Activated B cell treated with CpG ODN at 0.5 μM for 24 hours (primary cell): ENCODE measurements at regions of chr4 and their contacts with region 1.

Region 1: DNA sequence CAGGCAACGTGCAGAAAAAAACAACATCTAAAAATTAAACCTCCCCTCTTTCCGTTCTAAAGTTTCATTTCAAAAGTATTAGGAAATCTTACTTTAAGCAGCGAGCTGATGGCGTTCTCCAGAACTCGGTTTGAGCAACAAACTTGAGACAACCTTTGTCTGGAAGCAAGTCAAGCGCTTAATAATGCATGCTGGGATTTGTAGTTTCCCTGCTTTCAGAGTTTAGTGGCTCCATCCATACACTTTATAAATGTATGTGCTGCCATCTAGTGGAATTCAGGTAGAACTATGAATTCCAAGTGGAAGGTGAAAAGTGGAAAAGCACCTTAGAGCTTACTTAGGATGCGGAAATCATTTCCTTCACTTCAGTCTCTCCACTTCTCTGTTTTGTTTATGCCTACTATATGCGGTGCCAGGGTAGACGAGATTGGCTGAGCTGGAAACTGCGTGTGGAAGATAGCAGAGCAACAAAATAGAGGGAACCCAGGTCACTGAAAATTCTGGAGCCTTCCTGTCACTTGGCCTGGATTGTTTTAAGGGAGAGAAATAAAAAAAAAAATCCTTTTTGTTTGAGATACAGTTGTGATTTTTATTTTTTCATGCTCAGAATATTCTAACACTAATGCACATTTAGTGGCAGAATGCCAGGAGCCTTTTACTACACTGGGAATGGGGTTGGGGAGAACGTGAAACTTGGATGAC is at the start of gene BDH2:
- DNase-seq: no peak
- ATAC-seq: peak; percentile 99
- H3K4me3 Mint-ChIP-seq: peak within 1 kb of the TSS; percentile 79
- H3K27ac Mint-ChIP-seq: peak within 1 kb of the TSS; percentile 63
- H3K4me1 Mint-ChIP-seq: peaks cover 14% of the 10 kb centered on the region
- H3K27me3 Mint-ChIP-seq: no peaks in the 10 kb centered on the region
- CTCF ChIP-seq: peak; percentile 37
- total RNA-seq, gene BDH2: 5.1 and 6.5 TPM in 2 replicates

Region 2: DNA sequence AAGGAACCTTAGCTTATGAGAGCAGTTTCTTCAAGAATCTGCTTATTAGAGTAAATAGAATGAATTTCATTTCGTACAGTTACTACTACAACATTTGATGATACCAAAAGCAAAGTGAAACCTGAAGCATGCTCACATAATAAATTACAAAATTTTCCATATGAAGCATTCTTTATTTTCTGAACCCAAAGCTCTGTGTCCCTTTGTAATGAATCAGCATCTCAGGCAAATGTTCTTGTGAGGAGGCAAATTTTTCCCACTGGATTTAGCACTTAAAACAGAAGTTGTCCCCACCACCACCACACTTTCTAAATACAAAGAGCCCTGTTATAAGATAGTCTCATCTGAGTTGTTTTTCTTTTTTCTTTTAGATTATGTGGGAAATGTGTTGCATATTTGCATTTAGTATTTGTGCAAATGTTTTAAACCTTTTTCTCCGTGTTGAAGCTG is 669.4 kb before region 1 on chr4:
- CTCF ChIA-PET with region 1: no interaction called
- POLR2A ChIA-PET with region 1: no interaction called
- intact Hi-C with region 1: loop called (anchors 1 kb)
- DNase-seq: no peak
- ATAC-seq: no peak
- H3K4me3 Mint-ChIP-seq: peak overlapping the region; percentile 92
- H3K27ac Mint-ChIP-seq: peak overlapping the region; percentile 76
- H3K4me1 Mint-ChIP-seq: peaks cover 5% of the 10 kb centered on the region
- H3K27me3 Mint-ChIP-seq: no peaks in the 10 kb centered on the region
- CTCF ChIP-seq: no peak

Region 3: GRCh38 chr4:102620697-102621497 is 478.9 kb before region 1 on chr4:
- CTCF ChIA-PET with region 1: no interaction called
- POLR2A ChIA-PET with region 1: no interaction called
- intact Hi-C with region 1: loop called (anchors 1 kb)
- DNase-seq: no peak
- ATAC-seq: no peak
- H3K4me3 Mint-ChIP-seq: no peak overlapping the region
- H3K27ac Mint-ChIP-seq: peak overlapping the region; percentile 30
- H3K4me1 Mint-ChIP-seq: peaks cover 27% of the 10 kb centered on the region
- H3K27me3 Mint-ChIP-seq: no peaks in the 10 kb centered on the region
- CTCF ChIP-seq: no peak

Region 4: DNA sequence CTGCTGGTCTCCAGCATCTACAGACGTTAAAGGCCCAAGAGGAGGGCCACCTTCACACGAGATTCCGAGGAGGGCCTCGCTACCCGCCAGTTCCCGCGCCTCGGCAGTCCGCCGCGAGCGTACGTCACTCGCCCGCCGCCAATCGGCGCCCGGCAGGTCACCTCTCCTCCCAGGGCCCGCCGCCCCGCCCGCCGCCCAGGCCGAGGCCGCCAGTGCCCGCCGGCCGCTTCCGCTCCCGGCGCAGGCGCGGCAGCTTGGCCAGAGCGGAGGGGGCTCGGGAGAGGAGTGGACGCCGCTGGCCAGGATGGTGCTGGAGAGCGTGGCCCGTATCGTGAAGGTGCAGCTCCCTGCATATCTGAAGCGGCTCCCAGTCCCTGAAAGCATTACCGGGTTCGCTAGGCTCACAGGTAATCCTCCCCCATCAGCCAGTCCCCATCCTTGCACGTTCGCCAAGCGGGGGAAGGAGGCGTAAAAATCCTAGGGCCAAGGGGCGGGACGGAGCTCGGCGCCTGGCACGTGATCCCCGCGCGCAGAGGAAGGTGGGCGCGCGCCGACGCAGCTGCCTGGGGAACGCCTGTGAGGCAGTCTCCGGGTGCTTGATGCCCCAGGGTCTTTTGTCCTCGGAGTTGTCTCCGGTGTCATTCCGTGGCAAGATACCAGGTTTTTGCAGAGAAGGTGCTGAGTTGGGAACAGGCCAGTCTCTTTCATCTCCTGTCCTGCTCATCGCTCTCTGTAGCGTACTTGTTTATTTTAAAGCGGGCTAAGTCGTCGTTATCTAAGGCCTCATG is 230.9 kb before region 1 on chr4 and contains the start of gene CISD2:
- CTCF ChIA-PET with region 1: no interaction called
- POLR2A ChIA-PET with region 1: no interaction called
- intact Hi-C with region 1: loop called (anchors 5 kb)
- DNase-seq: peak; percentile 91
- ATAC-seq: peak; percentile 86
- H3K4me3 Mint-ChIP-seq: peak within 1 kb of the TSS; percentile 97
- H3K27ac Mint-ChIP-seq: peak within 1 kb of the TSS; percentile 97
- H3K4me1 Mint-ChIP-seq: peaks cover 51% of the 10 kb centered on the region
- H3K27me3 Mint-ChIP-seq: no peaks in the 10 kb centered on the region
- CTCF ChIP-seq: no peak
- total RNA-seq, gene CISD2: 12.6 and 13.7 TPM in 2 replicates

Region 5: GRCh38 chr4:103046416-103047290 is 53.2 kb before region 1 on chr4:
- CTCF ChIA-PET with region 1: interaction called, 11 read pairs
- POLR2A ChIA-PET with region 1: no interaction called
- intact Hi-C with region 1: loop called (anchors 1 kb)
- DNase-seq: no peak
- ATAC-seq: peak; percentile 93
- H3K4me3 Mint-ChIP-seq: no peak overlapping the region
- H3K27ac Mint-ChIP-seq: peak overlapping the region; percentile 14
- H3K4me1 Mint-ChIP-seq: peaks cover 10% of the 10 kb centered on the region
- H3K27me3 Mint-ChIP-seq: no peaks in the 10 kb centered on the region
- CTCF ChIP-seq: no peak

Region 6: GRCh38 chr4:103198111-103198765 is 98.4 kb after region 1 on chr4 and contains the start of gene CENPE:
- CTCF ChIA-PET with region 1: no interaction called
- POLR2A ChIA-PET with region 1: no interaction called
- intact Hi-C with region 1: loop called (anchors 1 kb)
- DNase-seq: peak; percentile 83
- ATAC-seq: peak; percentile 94
- H3K4me3 Mint-ChIP-seq: peak within 1 kb of the TSS; percentile 93
- H3K27ac Mint-ChIP-seq: peak within 1 kb of the TSS; percentile 91
- H3K4me1 Mint-ChIP-seq: peaks cover 10% of the 10 kb centered on the region
- H3K27me3 Mint-ChIP-seq: no peaks in the 10 kb centered on the region
- CTCF ChIP-seq: no peak
- total RNA-seq, gene CENPE: 2.4 and 2.5 TPM in 2 replicates

Region 7: DNA sequence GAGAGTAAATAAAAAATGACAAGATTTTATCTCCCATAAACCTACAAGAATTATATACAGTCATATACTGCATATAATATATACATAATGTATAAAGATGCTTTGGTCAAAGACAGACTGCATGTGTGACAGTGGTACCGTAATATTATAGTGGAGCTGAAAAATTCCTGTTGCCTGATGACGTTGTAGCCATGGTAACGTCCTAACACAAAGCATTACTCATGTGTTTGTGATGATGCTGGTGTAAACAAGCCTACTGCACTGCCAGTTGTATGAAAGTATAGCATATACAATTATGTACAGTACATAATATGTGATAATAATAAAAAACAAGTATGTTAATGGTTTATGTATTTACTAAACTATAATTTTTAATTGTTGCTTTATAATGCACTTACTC is 343.5 kb after region 1 on chr4:
- CTCF ChIA-PET with region 1: no interaction called
- POLR2A ChIA-PET with region 1: no interaction called
- intact Hi-C with region 1: no loop called
- DNase-seq: no peak
- ATAC-seq: no peak
- H3K4me3 Mint-ChIP-seq: no peak overlapping the region
- H3K27ac Mint-ChIP-seq: no peak overlapping the region
- H3K4me1 Mint-ChIP-seq: no peaks in the 10 kb centered on the region
- H3K27me3 Mint-ChIP-seq: no peaks in the 10 kb centered on the region
- CTCF ChIP-seq: no peak

Region 8: DNA sequence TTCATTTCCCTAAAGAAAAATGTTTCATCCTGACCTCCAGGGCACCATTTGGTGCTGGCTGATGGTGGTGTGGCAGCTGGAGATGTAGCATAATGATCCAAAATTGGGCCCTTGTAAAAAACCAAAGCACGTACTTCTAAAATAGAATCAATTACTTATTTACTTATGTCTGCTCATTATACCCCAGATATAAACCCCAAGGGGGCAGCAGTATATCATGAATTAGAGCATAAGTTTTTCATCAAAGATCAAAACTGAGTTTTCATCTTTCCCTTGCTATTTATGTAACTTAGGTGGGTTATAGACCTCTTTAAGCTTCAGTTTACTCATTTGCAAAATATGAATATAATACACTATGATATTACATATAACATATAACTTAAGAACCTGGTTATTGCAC is 378.9 kb after region 1 on chr4:
- CTCF ChIA-PET with region 1: no interaction called
- POLR2A ChIA-PET with region 1: no interaction called
- intact Hi-C with region 1: no loop called
- DNase-seq: no peak
- ATAC-seq: no peak
- H3K4me3 Mint-ChIP-seq: no peak overlapping the region
- H3K27ac Mint-ChIP-seq: no peak overlapping the region
- H3K4me1 Mint-ChIP-seq: no peaks in the 10 kb centered on the region
- H3K27me3 Mint-ChIP-seq: no peaks in the 10 kb centered on the region
- CTCF ChIP-seq: no peak